Posterior cingulate gyrus (tissue), 11 donors: ENCODE measurements at regions of chr3 and their contacts with region 1.

Region 1: DNA sequence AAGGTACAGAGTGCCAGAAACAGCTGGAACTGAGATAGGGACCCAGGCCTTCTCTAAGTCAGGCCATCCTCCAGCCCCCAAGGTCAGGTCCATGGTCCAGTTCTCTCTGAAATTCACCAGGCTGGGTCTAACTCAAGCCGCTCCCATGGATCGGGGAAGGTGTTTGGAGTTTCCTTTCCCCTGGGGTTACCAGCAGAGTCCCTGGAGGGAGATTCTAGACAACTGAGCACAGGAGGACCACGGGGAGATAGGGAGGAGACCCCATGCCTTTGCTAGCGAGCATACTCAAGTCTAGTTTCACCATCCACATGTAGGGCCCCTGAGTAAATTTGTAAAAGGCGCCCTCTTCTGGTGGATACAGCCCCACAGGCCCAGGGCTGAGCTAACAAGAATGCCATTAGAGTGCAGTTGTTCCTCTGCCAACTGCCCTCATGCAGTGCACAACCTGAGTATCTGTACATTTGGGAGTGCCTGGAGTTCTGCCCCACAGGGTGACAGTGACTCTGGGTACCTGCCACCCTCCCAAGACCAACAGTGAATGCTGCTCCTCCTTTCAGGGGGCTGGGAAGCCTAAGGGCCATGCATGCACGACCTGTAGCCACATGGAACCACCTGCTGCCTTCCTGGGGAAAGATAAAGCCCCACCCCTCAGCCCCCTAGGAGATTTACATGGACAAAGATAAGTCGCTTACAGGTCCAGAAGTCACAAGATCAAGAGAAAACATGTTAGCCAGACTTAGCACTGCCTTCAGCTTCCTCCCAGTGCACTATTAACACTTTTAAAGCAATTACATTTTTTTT is 89.0 kb downstream of the IQSEC1 start:
- DNase-seq: peak in 7 of 10 donors; percentile 59 to 96 (median 72)

Region 2: GRCh38 chr3:12479919-12480425 is 504.3 kb before region 1 on chr3:
- intact Hi-C with region 1: no loop called
- DNase-seq: no peak

Region 3: DNA sequence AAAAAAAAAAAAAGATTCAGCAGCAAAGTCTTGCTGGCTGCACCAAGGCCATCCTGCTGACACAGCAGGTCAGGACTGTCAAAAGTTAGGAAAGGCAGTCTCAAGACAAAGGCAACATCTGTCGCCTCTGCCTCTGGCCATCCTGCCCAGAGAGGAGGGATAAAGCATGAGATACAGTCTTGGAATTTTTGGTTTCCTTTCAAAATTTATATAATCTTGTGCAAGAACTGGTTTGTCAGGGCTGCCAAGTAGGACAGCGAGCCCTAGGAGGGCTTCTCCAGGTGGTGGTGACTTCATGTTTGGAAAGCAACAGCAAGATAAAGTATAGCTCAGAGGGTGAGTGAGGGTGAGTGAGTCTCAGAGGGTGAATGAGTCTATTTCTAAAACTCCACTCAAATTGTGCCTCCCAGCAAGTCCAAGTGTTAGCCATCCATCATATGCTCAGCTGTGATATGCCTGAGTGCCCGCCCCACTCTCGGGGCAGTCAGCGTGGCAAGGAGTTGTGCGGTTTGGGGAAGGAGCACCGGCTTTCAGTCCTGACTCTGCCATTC is 131.0 kb before region 1 on chr3:
- intact Hi-C with region 1: no loop called
- DNase-seq: no peak

Region 4: DNA sequence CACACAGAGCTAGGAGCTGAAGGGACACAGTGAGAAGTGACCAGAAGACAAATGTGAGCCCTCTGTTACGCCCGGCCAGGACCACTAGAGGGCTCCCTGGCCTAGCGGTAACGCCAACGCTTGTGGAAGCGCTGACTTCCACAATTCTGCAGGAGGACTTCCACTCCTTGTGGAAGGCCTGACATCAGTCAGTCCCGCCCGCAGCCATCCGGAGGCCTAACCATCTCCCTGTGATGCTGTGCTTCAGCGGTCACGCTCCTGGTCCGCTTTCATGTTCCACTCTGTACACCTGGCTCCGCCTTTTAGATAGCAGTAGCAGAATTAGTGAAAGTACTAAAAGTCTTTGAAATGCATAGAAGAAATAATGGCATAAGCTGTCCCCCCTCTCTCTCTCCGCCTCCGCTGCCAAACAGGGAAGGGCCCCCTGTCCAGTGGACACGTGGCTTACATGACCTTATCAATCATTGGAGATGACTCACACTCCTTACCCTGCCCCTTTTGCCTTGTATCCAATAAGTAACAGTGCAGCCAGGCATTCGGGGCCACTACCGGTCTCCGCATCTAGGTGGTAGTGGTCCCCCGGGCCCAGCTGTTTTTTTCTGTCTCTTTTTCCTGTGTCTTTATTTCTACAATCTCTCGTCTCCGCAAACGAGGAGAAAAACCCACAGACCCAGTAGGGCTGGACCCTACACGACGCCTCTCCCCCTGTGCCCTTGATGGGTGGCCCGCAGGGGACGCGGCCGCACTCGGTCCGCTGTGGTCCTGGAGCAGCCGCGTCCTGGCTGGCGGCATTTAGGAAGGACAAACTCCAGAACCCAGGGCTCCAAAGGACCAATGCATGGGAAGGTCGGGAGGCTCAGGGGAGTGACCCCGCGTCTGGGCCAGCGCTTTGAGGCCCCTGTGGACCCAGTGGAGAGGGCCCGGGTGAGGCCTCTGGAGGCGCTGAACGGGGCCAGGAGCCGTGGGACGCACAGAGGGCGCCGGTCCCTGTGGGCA is 115.9 kb before region 1 on chr3:
- intact Hi-C with region 1: loop called (anchors 5 kb)
- DNase-seq: peak; percentile 72 to 98 (median 86)

Region 5: GRCh38 chr3:12934431-12934830 is 49.8 kb before region 1 on chr3:
- intact Hi-C with region 1: loop called (anchors 10 kb)
- DNase-seq: peak in 1 of 10 donors; percentile 78

Region 6: DNA sequence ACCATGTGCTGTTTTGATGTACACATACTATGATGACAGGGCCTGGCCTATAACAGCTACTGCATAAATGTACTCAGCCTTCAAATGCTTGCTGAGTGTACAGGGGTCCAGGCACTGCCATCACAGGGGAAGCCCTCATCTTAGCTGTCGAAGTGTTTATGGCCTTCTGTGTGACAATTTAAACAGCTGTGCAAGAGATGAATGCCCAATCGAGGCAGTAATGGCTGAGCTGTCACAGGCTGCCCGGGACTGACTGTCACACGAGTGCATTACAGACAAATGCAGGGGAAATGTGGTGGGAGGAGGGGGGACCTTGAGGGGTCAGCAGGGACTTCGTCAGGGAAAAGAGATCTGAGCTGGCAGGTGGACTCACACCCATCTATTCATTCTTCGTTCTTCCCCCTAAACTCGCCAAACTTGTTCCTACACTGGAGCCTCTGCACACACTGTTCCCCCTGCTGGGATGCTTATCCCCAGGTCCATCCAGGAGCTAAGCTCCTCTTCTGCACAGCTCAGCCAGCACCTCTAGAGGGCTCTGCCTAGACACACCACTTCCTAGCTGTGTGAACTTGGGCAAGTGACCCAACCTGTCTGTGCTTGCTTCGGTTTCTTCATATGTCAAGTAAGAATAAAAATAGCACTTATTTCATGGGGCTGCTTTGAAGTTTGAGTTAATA is 245.2 kb after region 1 on chr3:
- intact Hi-C with region 1: no loop called
- DNase-seq: peak in 2 of 10 donors; percentile 8 to 52